Activated CD4-positive, alpha-beta T cell treated with anti-CD3 and anti-CD28 coated beads for 36 hours (primary cell): ENCODE measurements at regions of chr10 and their contacts with region 1.

Region 1: DNA sequence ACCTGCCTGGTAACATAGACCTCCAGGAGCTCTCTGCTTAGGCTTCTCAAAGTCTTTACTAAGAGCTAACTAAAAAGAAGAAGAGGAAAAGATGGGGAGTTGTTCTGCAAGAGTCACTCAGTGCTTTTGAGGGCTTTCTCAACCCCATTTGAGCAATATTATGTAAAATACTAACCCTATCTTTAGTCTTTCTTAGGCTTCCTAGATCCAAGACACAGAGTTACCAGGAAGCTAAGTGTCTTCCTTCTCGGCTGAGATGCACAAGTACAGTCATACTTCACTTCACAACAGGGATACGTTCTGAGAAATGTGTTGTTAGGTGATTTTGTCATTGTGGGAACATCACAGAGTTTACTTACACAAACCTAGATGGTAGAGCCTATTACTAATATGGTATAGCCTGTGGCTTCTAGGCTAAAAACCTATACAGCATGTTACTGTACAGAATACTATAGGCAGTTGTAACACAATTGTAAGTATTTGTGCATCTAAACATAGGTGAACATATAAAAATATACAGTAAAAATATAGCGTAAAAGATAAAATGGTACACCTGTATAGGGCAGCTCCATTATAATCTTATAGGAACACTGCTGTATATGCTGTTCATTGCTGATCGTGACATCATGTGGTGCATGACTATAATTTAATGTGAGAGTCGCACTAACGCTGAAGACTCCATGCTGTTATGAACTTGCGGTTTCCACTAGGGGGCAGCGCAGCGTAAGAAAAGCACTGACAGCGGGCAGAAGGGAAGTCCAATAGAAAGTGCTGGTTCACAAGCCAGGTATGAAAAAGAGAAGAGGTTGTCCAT is 16.3 kb downstream of the ANKRD22 start:
- DNase-seq: peak; percentile 93
- ATAC-seq: peak; percentile 90
- H3K4me3 Mint-ChIP-seq: no peak overlapping the region
- H3K27ac Mint-ChIP-seq: no peak overlapping the region
- H3K4me1 Mint-ChIP-seq: peaks cover 28% of the 10 kb centered on the region
- H3K27me3 Mint-ChIP-seq: no peaks in the 10 kb centered on the region

Region 2: GRCh38 chr10:88493691-88494483 is 341.4 kb before region 1 on chr10:
- CTCF ChIA-PET with region 1: no interaction called
- POLR2A ChIA-PET with region 1: no interaction called
- intact Hi-C with region 1: no loop called
- DNase-seq: no peak
- ATAC-seq: no peak
- H3K4me3 Mint-ChIP-seq: no peak overlapping the region
- H3K27ac Mint-ChIP-seq: no peak overlapping the region
- H3K4me1 Mint-ChIP-seq: peaks cover 14% of the 10 kb centered on the region
- H3K27me3 Mint-ChIP-seq: no peaks in the 10 kb centered on the region

Region 3: DNA sequence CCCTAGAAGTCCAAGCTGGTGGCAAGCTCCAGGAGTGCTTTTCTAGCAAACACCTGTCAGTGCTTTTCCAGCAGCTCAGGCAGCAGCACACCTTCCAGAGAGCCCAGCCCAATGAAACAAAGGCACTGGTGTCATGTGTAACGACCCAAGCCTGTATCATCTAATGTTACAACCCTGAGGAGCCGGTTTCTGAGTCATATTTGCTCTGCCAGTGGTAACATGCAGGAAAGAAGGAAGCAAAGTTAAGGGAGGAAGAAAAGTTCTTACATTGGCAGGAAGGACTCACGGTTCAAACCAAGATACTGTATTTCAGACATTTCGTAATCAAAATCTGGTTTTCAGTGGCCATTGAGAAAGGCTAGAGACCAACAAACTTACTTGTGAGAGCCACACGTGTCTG is 16.4 kb after region 1 on chr10 and contains the start of gene ANKRD22:
- CTCF ChIA-PET with region 1: interaction called, 47 read pairs
- POLR2A ChIA-PET with region 1: no interaction called
- intact Hi-C with region 1: no loop called
- DNase-seq: no peak
- ATAC-seq: no peak
- H3K4me3 Mint-ChIP-seq: no peak within 1 kb of the TSS
- H3K27ac Mint-ChIP-seq: no peak within 1 kb of the TSS
- H3K4me1 Mint-ChIP-seq: peaks cover 18% of the 10 kb centered on the region
- H3K27me3 Mint-ChIP-seq: peaks cover 9% of the 10 kb centered on the region
- total RNA-seq, gene ANKRD22: 0.37 TPM

Region 4: GRCh38 chr10:88880282-88881076 is 45.2 kb after region 1 on chr10:
- CTCF ChIA-PET with region 1: interaction called, 32 read pairs
- POLR2A ChIA-PET with region 1: interaction called, 3 read pairs
- intact Hi-C with region 1: loop called (anchors 1 kb)
- DNase-seq: peak; percentile 87
- ATAC-seq: peak; percentile 81
- H3K4me3 Mint-ChIP-seq: peak overlapping the region; percentile 97
- H3K27ac Mint-ChIP-seq: peak overlapping the region; percentile 98
- H3K4me1 Mint-ChIP-seq: peaks cover 65% of the 10 kb centered on the region
- H3K27me3 Mint-ChIP-seq: no peaks in the 10 kb centered on the region

Region 5: DNA sequence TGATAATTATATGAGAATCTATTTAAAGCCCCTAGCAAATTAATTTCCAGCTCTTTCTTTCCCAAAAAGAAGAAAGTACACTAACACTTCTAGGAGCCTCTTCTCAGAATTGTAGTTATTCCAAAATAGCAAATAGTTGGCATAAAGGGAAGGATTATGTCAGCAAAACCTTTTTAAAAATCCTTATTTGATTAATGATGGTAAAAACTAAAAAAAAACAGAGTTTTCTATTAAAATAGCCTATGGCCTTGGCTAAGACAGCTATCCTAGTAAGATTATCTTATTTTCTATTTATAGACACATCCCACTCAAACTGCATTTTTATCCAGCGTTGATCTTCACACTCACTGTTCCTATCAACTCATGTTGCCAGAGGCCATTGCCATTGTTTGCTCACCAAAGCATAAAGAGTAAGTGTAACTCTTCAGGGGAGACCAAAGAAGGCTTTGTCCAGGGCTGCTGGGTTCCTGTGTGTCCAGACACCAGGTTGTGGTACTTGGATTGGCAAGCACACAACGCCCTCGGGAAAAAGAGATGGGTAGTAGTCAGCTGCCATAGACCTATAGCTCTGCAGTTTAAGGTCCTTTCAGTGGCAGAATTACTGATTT is 85.8 kb after region 1 on chr10:
- CTCF ChIA-PET with region 1: interaction called, 26 read pairs
- POLR2A ChIA-PET with region 1: no interaction called
- intact Hi-C with region 1: no loop called
- DNase-seq: no peak
- ATAC-seq: no peak
- H3K4me3 Mint-ChIP-seq: no peak overlapping the region
- H3K27ac Mint-ChIP-seq: no peak overlapping the region
- H3K4me1 Mint-ChIP-seq: peaks cover 5% of the 10 kb centered on the region
- H3K27me3 Mint-ChIP-seq: no peaks in the 10 kb centered on the region

Region 6: GRCh38 chr10:89079961-89080360 is 244.7 kb after region 1 on chr10:
- CTCF ChIA-PET with region 1: no interaction called
- POLR2A ChIA-PET with region 1: no interaction called
- intact Hi-C with region 1: loop called in 1 of 2 experiments (anchors 5 kb)
- DNase-seq: no peak
- ATAC-seq: no peak
- H3K4me3 Mint-ChIP-seq: no peak overlapping the region
- H3K27ac Mint-ChIP-seq: no peak overlapping the region
- H3K4me1 Mint-ChIP-seq: peaks cover 21% of the 10 kb centered on the region
- H3K27me3 Mint-ChIP-seq: peaks cover 2% of the 10 kb centered on the region

Region 7: GRCh38 chr10:89426230-89426868 is 591.0 kb after region 1 on chr10:
- CTCF ChIA-PET with region 1: no interaction called
- POLR2A ChIA-PET with region 1: no interaction called
- intact Hi-C with region 1: no loop called
- DNase-seq: no peak
- ATAC-seq: peak; percentile 76
- H3K4me3 Mint-ChIP-seq: no peak overlapping the region
- H3K27ac Mint-ChIP-seq: no peak overlapping the region
- H3K4me1 Mint-ChIP-seq: peaks cover under 1% of the 10 kb centered on the region
- H3K27me3 Mint-ChIP-seq: no peaks in the 10 kb centered on the region